Activated CD4-positive, alpha-beta T cell treated with anti-CD3 and anti-CD28 coated beads for 36 hours (primary cell): ENCODE measurements at regions of chr22 and their contacts with region 1.

Region 1: DNA sequence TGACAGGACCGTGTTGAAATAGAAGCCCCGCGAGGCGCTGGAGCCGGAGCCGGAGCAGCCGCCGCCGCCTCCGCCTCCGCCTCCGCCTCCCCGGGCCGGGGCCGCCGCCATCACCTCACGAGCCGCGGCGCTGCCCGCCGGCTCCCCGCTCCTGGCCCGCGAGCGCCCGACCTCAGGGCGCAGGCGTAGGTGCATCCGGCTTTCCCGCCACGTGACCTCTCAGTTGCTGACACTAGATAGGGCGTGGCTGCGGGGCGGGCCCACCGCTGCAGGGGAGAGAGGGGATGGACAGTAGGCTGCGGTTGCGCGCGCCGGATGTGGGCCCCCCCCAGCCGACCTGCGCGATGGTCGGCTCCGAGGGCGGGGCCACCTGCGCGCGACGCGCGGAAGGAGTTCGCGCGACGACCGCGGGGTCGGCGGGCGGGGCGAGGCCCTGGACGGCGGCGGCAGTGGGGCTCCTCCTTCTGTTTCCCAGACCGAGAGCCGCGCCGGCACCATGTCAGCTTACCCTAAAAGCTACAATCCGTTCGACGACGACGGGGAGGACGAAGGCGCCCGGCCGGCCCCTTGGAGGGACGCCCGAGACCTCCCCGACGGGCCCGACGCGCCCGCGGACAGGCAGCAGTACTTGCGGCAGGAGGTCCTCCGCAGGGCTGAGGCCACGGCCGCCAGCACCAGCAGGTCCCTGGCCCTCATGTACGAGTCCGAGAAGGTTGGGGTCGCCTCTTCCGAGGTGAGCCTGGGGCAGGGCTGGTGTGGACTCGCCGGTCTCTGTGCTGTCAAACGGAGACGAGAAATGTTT is at the starts of genes PI4KA and SNAP29:
- DNase-seq: peak; percentile 99
- ATAC-seq: peak; percentile 95
- H3K4me3 Mint-ChIP-seq: peak within 1 kb of the TSS; percentile 87
- H3K27ac Mint-ChIP-seq: peak within 1 kb of the TSS; percentile 79
- H3K4me1 Mint-ChIP-seq: peaks cover 46% of the 10 kb centered on the region
- H3K27me3 Mint-ChIP-seq: no peaks in the 10 kb centered on the region
- total RNA-seq, gene PI4KA: 52.8 TPM
- total RNA-seq, gene SNAP29: 22.8 to 33.8 TPM

Region 2: GRCh38 chr22:20110038-20110985 is 748.5 kb before region 1 on chr22:
- CTCF ChIA-PET with region 1: no interaction called
- POLR2A ChIA-PET with region 1: no interaction called
- intact Hi-C with region 1: no loop called
- DNase-seq: no peak
- ATAC-seq: no peak
- H3K4me3 Mint-ChIP-seq: no peak overlapping the region
- H3K27ac Mint-ChIP-seq: peak overlapping the region; percentile 93
- H3K4me1 Mint-ChIP-seq: peaks cover 28% of the 10 kb centered on the region
- H3K27me3 Mint-ChIP-seq: no peaks in the 10 kb centered on the region

Region 3: DNA sequence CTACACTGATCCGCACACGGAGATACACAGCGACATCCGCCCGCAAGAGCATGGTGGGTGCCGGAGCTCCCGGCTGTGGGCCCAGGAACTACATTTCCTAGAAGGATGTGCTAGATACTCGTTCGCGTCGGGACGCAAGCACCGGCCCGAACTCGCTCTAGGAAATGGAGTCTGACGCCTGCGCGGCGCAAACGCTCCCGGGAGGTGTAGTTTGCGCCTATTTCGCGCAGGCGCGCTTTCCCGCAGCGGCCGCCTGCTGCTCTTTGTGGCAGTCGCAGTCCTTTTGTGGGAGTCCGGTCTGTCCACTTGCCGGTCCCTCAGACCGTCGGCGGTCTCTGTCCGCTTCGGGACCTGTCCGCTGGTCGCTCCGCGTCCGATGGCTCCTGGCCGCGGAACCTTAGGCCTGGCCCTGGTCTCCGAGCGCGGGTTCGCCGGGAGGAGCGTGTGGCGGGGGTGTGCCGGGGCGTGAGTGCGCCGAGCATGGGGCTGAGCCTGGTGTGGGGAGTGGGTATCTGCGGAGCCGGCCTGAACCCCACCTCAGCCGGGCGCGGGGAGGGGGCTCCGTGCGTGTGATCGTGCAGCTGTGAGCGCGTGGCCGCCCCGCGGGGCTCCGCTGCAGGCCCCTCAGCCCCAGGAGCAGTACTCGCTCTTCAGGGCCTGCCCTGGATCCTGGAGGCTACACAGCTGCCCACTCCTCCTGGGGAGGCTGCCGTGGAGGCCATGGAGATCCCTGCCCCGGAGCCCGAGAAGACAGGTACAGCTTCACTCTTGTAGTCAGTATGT is 464.7 kb before region 1 on chr22 and contains the start of gene ZNF74:
- CTCF ChIA-PET with region 1: no interaction called
- POLR2A ChIA-PET with region 1: no interaction called
- intact Hi-C with region 1: loop called in 1 of 2 experiments (anchors 1 kb)
- DNase-seq: peak; percentile 90
- ATAC-seq: peak; percentile 95
- H3K4me3 Mint-ChIP-seq: peak within 1 kb of the TSS; percentile 77
- H3K27ac Mint-ChIP-seq: peak within 1 kb of the TSS; percentile 86
- H3K4me1 Mint-ChIP-seq: peaks cover 24% of the 10 kb centered on the region
- H3K27me3 Mint-ChIP-seq: no peaks in the 10 kb centered on the region
- total RNA-seq, gene ZNF74: 6.5 to 10.3 TPM

Region 4: GRCh38 chr22:20803696-20804324 is 55.0 kb before region 1 on chr22:
- CTCF ChIA-PET with region 1: no interaction called
- POLR2A ChIA-PET with region 1: interaction called, 13 read pairs
- intact Hi-C with region 1: no loop called
- DNase-seq: peak; percentile 72
- ATAC-seq: peak; percentile 53
- H3K4me3 Mint-ChIP-seq: no peak overlapping the region
- H3K27ac Mint-ChIP-seq: no peak overlapping the region
- H3K4me1 Mint-ChIP-seq: peaks cover 6% of the 10 kb centered on the region
- H3K27me3 Mint-ChIP-seq: no peaks in the 10 kb centered on the region

Region 5: DNA sequence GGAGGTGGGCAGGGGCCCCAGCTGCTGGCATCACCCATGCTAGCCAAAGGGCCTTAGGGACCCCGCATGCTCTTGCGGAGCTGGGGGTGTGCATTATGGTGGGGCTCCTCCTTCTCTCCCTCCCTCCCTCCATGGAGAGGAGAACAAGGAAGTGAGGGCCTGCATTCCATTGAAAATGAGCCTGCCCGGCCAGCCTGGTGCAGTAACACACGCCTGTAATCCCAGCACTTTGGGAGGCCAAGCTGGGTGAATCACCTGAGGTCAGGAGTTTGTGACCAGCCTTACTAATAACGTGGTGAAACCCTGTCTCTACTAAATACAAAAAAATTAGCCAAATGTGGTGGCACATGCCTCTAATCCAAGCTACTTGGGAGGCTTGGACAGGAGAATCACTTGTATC is 22.4 kb after region 1 on chr22:
- CTCF ChIA-PET with region 1: no interaction called
- POLR2A ChIA-PET with region 1: no interaction called
- intact Hi-C with region 1: no loop called
- DNase-seq: no peak
- ATAC-seq: no peak
- H3K4me3 Mint-ChIP-seq: no peak overlapping the region
- H3K27ac Mint-ChIP-seq: no peak overlapping the region
- H3K4me1 Mint-ChIP-seq: no peaks in the 10 kb centered on the region
- H3K27me3 Mint-ChIP-seq: no peaks in the 10 kb centered on the region

Region 6: DNA sequence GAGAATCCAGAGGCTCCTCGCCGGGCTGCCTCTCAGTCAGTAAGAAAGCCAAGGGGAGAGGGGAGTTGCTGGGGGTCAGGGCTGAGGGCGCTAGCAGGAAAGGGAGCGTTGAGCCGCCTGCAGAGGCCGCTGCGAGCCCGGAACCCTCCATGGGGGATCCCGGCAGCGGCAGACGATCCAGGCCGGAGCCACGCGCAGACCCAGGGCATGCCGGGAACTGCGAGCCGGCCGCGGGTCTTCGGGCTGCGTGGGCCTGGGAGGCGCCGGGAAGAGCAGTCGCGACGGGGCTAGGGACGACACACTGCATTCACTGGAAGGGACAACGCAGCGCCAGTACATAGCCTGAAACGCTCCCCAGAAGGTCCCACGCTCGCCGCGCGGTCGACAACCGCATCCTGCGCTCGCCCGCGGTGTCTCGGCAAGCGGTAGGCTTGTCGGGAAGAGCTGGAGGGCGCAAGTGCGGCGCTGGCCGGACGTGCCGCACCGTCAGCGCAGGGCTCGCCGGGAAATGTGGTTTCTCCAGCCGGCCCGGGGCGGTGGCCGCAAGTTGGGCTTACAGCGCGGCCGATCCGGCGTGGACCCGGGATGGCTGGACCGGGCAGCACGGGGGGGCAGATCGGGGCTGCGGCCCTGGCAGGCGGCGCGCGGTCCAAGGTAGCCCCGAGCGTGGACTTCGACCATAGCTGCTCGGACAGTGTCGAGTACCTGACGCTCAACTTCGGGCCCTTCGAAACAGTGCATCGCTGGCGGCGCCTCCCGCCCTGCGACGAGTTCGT is 123.2 kb after region 1 on chr22 and contains the start of gene LZTR1:
- CTCF ChIA-PET with region 1: no interaction called
- POLR2A ChIA-PET with region 1: no interaction called
- intact Hi-C with region 1: loop called in 1 of 2 experiments (anchors 1 kb)
- DNase-seq: peak; percentile 85
- ATAC-seq: peak; percentile 74
- H3K4me3 Mint-ChIP-seq: peak within 1 kb of the TSS; percentile 98
- H3K27ac Mint-ChIP-seq: peak within 1 kb of the TSS; percentile 92
- H3K4me1 Mint-ChIP-seq: peaks cover 40% of the 10 kb centered on the region
- H3K27me3 Mint-ChIP-seq: no peaks in the 10 kb centered on the region
- total RNA-seq, gene LZTR1: 31.9 to 40.5 TPM

Region 7: GRCh38 chr22:21001560-21002325 is 142.9 kb after region 1 on chr22 and contains the start of gene THAP7:
- CTCF ChIA-PET with region 1: no interaction called
- POLR2A ChIA-PET with region 1: no interaction called
- intact Hi-C with region 1: loop called (anchors 1 to 2 kb)
- DNase-seq: peak; percentile 99
- ATAC-seq: peak; percentile 92
- H3K4me3 Mint-ChIP-seq: peak within 1 kb of the TSS; percentile 92
- H3K27ac Mint-ChIP-seq: peak within 1 kb of the TSS; percentile 96
- H3K4me1 Mint-ChIP-seq: peaks cover 19% of the 10 kb centered on the region
- H3K27me3 Mint-ChIP-seq: no peaks in the 10 kb centered on the region
- total RNA-seq, gene THAP7: 25.1 to 27.2 TPM

Region 8: DNA sequence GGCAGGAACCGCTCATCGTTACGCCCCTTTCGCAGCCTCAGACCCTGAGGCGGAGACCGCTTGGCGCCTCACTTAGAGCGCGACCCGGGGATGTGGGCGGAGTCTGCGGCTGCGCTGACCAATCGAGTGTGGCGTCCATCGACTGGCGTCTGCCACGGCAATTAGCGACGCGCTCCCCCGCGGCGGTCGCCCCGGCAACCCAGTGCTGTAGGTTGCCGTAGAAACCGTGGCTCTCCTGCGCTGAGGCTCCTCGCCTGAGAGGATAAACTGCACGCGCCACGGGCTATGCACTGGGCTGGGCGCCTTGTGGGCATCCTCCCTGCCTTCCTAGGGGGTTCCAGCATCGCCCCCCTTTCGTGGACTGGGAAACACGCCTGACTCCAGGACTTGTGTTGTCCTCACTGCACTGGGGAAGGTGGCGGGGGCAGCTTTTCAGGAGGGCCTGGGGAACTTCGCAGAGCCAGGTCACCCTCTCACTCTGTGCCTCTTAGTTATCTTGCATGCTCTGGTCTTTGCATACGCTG is 155.4 kb after region 1 on chr22:
- CTCF ChIA-PET with region 1: no interaction called
- POLR2A ChIA-PET with region 1: no interaction called
- intact Hi-C with region 1: loop called in 1 of 2 experiments (anchors 1 kb)
- DNase-seq: peak; percentile 91
- ATAC-seq: peak; percentile 97
- H3K4me3 Mint-ChIP-seq: peak overlapping the region; percentile 78
- H3K27ac Mint-ChIP-seq: peak overlapping the region; percentile 67
- H3K4me1 Mint-ChIP-seq: peaks cover 20% of the 10 kb centered on the region
- H3K27me3 Mint-ChIP-seq: no peaks in the 10 kb centered on the region